ENCODE measurements at regions of chr10 and their contacts with region 1.

Region 1: DNA sequence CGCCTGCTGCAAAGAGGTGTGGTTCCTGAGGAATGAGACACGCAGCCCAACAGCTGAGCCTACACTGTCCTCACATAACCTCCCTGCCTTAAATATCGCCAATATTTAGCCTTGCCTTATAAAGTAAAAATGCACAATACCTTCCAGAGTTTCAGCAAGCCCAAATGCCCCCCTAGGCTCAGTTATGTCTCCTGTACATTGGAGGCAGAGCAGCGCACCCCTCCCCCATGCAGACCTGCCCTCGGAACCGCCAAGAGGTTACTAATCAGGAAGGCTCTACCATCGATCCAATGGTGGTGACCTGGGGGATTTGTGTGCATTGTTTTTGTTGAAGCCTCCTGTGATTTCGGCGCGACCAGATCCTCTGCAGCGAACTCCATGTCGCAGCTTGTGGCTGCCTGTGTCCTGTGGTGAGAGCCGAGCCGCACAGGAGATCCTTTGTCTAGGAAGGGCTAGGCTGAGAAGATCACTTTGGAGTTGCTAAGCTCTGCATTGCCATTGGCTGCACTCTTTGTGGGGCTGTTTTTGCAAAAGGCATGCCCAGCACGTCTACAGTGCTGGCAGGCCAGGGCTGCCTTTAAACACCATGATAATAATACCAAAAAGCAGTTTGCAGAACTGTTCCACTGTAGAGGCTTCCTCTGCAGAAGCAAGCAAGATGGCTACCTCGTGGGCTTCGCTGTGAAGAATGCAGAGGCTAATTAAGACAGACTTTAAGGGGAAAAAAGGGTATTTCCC is 40.1 kb downstream of the TET1 start:
- DNase-seq: peak; percentile 61 to 80 (median 64)
- ATAC-seq: peak; percentile 93 to 95 (median 94)
- H3K4me3 ChIP-seq: peak overlapping the region; percentile 22 to 66 (median 56)
- H3K27ac ChIP-seq: peak overlapping the region; percentile 2 to 88 (median 70)
- H3K4me1 ChIP-seq: peaks cover 2 to 40% (median 23%) of the 10 kb centered on the region in 12 donors
- H3K27me3 ChIP-seq: no peaks in the 10 kb centered on the region
- CTCF ChIP-seq: no peak
- POLR2A ChIP-seq: no peak

Region 2: DNA sequence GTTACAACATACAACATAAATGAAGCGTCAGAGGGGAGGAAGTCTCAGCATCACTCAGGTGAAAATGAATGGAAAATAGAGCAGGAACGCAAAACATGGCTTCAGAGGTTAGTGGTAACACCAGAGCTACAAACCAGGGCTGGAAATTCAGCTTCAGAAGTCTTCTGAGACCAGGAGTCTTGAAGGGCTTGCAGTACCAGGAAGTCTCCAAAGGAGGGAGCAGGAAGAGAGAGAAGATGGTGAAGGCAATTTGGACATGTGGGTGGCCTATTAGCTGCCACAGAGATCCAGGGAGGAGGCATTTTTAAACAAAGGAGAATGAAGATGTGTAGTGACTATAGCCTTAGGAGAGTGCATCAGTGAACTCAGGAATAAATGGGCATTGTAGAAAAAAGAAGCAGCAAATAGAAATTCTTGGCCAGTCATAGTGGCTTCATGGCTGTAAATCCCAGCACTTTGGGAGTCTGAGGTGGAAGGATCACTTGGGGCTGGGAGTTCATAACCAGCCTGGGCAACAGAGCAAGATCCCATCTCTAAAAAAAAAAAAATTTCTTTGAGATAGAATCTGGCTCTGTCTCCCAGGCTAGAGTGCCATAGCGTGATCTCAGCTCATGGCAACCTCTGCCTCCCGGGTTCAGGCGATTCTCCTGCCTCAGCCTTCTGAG is 49.3 kb before region 1 on chr10:
- intact Hi-C with region 1: loop called in 1 of 10 experiments (anchors 10 kb)
- DNase-seq: peak in 3 of 5 donors; percentile 30 to 43 (median 36)
- ATAC-seq: peak in 3 of 4 donors; percentile 72 to 87 (median 74)
- H3K4me3 ChIP-seq: no peak overlapping the region
- H3K27ac ChIP-seq: no peak overlapping the region
- H3K4me1 ChIP-seq: no peaks in the 10 kb centered on the region
- H3K27me3 ChIP-seq: no peaks in the 10 kb centered on the region
- CTCF ChIP-seq: peak; percentile 64 to 86 (median 76)
- POLR2A ChIP-seq: no peak

Region 3: GRCh38 chr10:68560186-68560942 is 39.8 kb before region 1 on chr10 and contains the start of gene TET1:
- intact Hi-C with region 1: loop called in 5 of 10 experiments (anchors 2 to 10 kb)
- DNase-seq: peak; percentile 30 to 68 (median 43)
- ATAC-seq: peak in 3 of 4 donors; percentile 55 to 81 (median 79)
- H3K4me3 ChIP-seq: peak within 1 kb of the TSS; percentile 61 to 91 (median 74)
- H3K27ac ChIP-seq: peak within 1 kb of the TSS in 7 of 12 donors; percentile 3 to 63 (median 32)
- H3K4me1 ChIP-seq: peaks cover 0 to 27% (median 7%) of the 10 kb centered on the region in 12 donors
- H3K27me3 ChIP-seq: peaks cover 0 to 46% (median 9%) of the 10 kb centered on the region in 9 donors
- CTCF ChIP-seq: no peak
- POLR2A ChIP-seq: no peak
- total RNA-seq, gene TET1: 1.3 to 4.1 (median 2.6) TPM

Region 4: GRCh38 chr10:68628576-68629127 is 28.4 kb after region 1 on chr10:
- intact Hi-C with region 1: no loop called
- DNase-seq: no peak
- ATAC-seq: peak in 2 of 4 donors; percentile 31 to 38
- H3K4me3 ChIP-seq: no peak overlapping the region
- H3K27ac ChIP-seq: no peak overlapping the region
- H3K4me1 ChIP-seq: peaks cover 0 to 26% (median 9%) of the 10 kb centered on the region in 12 donors
- H3K27me3 ChIP-seq: no peaks in the 10 kb centered on the region
- CTCF ChIP-seq: no peak
- POLR2A ChIP-seq: no peak